Left lung (tissue), 14 donors: ENCODE measurements at regions of chr3 and their contacts with region 1.

Region 1: DNA sequence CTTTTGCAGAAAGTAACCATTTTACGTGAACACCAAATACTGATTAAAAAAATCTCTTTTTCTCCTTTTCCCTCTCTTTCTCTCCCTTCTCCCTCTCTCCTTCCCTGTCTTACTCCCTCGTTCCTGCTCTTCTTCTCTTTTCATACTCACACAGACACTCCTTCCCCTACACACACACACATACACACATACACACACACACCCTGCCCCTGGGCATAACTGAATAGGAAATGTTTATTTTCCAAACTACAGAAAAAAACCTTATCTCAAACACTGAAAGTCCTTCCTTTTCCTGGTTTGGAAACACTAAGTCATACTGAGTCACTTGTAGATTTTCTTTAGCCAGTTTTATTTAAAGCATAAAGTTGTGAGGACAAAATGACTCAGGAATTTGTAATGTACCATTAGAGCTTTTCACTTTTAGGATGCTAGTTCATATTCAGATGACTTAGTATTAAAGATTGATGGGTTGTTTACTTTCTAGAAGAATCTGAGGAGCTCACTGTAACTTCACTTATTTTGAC is 62.4 kb downstream of the MBNL1 start:
- DNase-seq: no peak
- ATAC-seq: peak; percentile 51
- H3K4me3 ChIP-seq: no peak overlapping the region
- H3K27ac ChIP-seq: peak overlapping the region; percentile 63 to 70
- H3K4me1 ChIP-seq: peaks cover 42 to 92% of the 10 kb centered on the region in 2 donors
- H3K27me3 ChIP-seq: no peaks in the 10 kb centered on the region
- CTCF ChIP-seq: no peak

Region 2: GRCh38 chr3:152382312-152383135 is 51.4 kb after region 1 on chr3:
- intact Hi-C with region 1: loop called in 1 of 2 experiments (anchors 10 kb)
- DNase-seq: no peak
- ATAC-seq: peak; percentile 36
- H3K4me3 ChIP-seq: peak overlapping the region; percentile 1 to 10
- H3K27ac ChIP-seq: peak overlapping the region; percentile 69 to 82
- H3K4me1 ChIP-seq: peaks cover 30 to 96% of the 10 kb centered on the region in 2 donors
- H3K27me3 ChIP-seq: no peaks in the 10 kb centered on the region
- CTCF ChIP-seq: no peak